ENCODE measurements at regions of chr2 and their contacts with region 1.

Region 1: GRCh38 chr2:46062637-46063412 is 234.4 kb upstream of the EPAS1 start:
- DNase-seq: peak; percentile 73
- H3K4me3 ChIP-seq: no peak overlapping the region
- H3K27ac ChIP-seq: no peak overlapping the region
- H3K27me3 ChIP-seq: no peaks in the 10 kb centered on the region
- CTCF ChIP-seq: peak; percentile 92

Region 2: GRCh38 chr2:45833968-45834344 is 228.9 kb before region 1 on chr2:
- CTCF ChIA-PET with region 1: no interaction called
- POLR2A ChIA-PET with region 1: no interaction called
- DNase-seq: no peak
- H3K4me3 ChIP-seq: no peak overlapping the region
- H3K27ac ChIP-seq: no peak overlapping the region
- H3K27me3 ChIP-seq: no peaks in the 10 kb centered on the region
- CTCF ChIP-seq: no peak

Region 3: GRCh38 chr2:46010925-46011490 is 51.8 kb before region 1 on chr2:
- CTCF ChIA-PET with region 1: interaction called, 11 read pairs
- POLR2A ChIA-PET with region 1: no interaction called
- DNase-seq: no peak
- H3K4me3 ChIP-seq: no peak overlapping the region
- H3K27ac ChIP-seq: no peak overlapping the region
- H3K27me3 ChIP-seq: no peaks in the 10 kb centered on the region
- CTCF ChIP-seq: peak; percentile 64

Region 4: GRCh38 chr2:46050489-46050888 is 12.3 kb before region 1 on chr2:
- CTCF ChIA-PET with region 1: interaction called, 65 read pairs
- POLR2A ChIA-PET with region 1: no interaction called
- DNase-seq: no peak
- H3K4me3 ChIP-seq: no peak overlapping the region
- H3K27ac ChIP-seq: no peak overlapping the region
- H3K27me3 ChIP-seq: no peaks in the 10 kb centered on the region
- CTCF ChIP-seq: no peak

Region 5: GRCh38 chr2:46125798-46126197 is 63.0 kb after region 1 on chr2:
- CTCF ChIA-PET with region 1: interaction called, 12 read pairs
- POLR2A ChIA-PET with region 1: no interaction called
- DNase-seq: no peak
- H3K4me3 ChIP-seq: no peak overlapping the region
- H3K27ac ChIP-seq: peak overlapping the region; percentile 33
- H3K27me3 ChIP-seq: no peaks in the 10 kb centered on the region
- CTCF ChIP-seq: no peak

Region 6: DNA sequence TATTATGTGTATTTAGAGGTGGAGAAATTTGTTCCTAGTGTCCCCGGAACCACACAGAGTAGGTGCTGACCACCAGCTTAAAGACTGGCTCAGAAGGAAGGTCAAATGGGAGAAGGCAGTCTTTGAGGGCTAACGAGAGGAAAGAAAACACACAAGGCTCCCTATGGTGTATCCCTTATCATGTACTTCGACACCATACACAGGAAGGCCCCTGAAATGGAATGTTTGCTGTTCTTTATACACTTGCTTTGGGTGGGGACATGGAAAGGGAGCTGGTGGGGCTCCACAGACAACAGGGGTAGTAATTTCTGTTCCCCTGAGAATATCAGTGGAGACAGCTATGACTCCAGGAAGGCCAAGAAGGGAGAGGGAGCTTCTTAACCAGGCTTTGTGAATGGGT is 240.4 kb after region 1 on chr2:
- CTCF ChIA-PET with region 1: interaction called, 11 read pairs
- POLR2A ChIA-PET with region 1: interaction called, 12 read pairs
- DNase-seq: no peak
- H3K4me3 ChIP-seq: no peak overlapping the region
- H3K27ac ChIP-seq: no peak overlapping the region
- H3K27me3 ChIP-seq: no peaks in the 10 kb centered on the region
- CTCF ChIP-seq: no peak